ENCODE measurements at regions of chr11 and their contacts with region 1.

Region 1: GRCh38 chr11:65625628-65626342 is 10.2 kb downstream of the PCNX3 start:
- DNase-seq: peak; percentile 64 to 84 (median 71)
- ATAC-seq: peak; percentile 57 to 82 (median 74)
- H3K4me3 ChIP-seq: no peak overlapping the region
- H3K27ac ChIP-seq: no peak overlapping the region
- H3K4me1 ChIP-seq: peaks cover 0 to 19% (median 6%) of the 10 kb centered on the region in 12 donors
- H3K27me3 ChIP-seq: no peaks in the 10 kb centered on the region
- CTCF ChIP-seq: peak; percentile 51 to 75 (median 68)
- POLR2A ChIP-seq: no peak

Region 2: GRCh38 chr11:65773784-65774411 is 148.1 kb after region 1 on chr11:
- intact Hi-C with region 1: loop called in 1 of 10 experiments (anchors 5 kb)
- DNase-seq: no peak
- ATAC-seq: no peak
- H3K4me3 ChIP-seq: no peak overlapping the region
- H3K27ac ChIP-seq: no peak overlapping the region
- H3K4me1 ChIP-seq: peaks cover 0 to 59% (median 0%) of the 10 kb centered on the region in 12 donors
- H3K27me3 ChIP-seq: no peaks in the 10 kb centered on the region
- CTCF ChIP-seq: no peak
- POLR2A ChIP-seq: no peak

Region 3: GRCh38 chr11:65817835-65818742 is 192.3 kb after region 1 on chr11:
- intact Hi-C with region 1: loop called in 6 of 10 experiments (anchors 1 to 10 kb)
- DNase-seq: peak; percentile 92 to 97 (median 94)
- ATAC-seq: peak; percentile 62 to 98 (median 96)
- H3K4me3 ChIP-seq: peak overlapping the region; percentile 31 to 83 (median 67)
- H3K27ac ChIP-seq: peak overlapping the region in 11 of 12 donors; percentile 33 to 86 (median 62)
- H3K4me1 ChIP-seq: peaks cover 0 to 25% (median 5%) of the 10 kb centered on the region in 12 donors
- H3K27me3 ChIP-seq: no peaks in the 10 kb centered on the region
- CTCF ChIP-seq: peak in 11 of 12 donors; percentile 98 to 100 (median 100)
- POLR2A ChIP-seq: no peak

Region 4: GRCh38 chr11:66001942-66002647 is 376.3 kb after region 1 on chr11 and contains the starts of genes BANF1 and EIF1AD:
- intact Hi-C with region 1: loop called in 1 of 10 experiments (anchors 5 kb)
- DNase-seq: peak; percentile 93
- ATAC-seq: peak; percentile 87 to 95 (median 90)
- H3K4me3 ChIP-seq: peak within 1 kb of the TSS; percentile 68 to 98 (median 82)
- H3K27ac ChIP-seq: peak within 1 kb of the TSS; percentile 73 to 99 (median 94)
- H3K4me1 ChIP-seq: peaks cover 3 to 28% (median 24%) of the 10 kb centered on the region in 12 donors
- H3K27me3 ChIP-seq: no peaks in the 10 kb centered on the region
- CTCF ChIP-seq: peak in 1 of 12 donors; percentile 13
- POLR2A ChIP-seq: peak in 1 of 2 donors; percentile 50
- total RNA-seq, gene BANF1: 68.7 to 227 (median 187) TPM
- total RNA-seq, gene EIF1AD: 13.0 to 25.2 (median 20.7) TPM

Measured in heart left ventricle (tissue), 16 donors.